ENCODE measurements at regions of chr17 and their contacts with region 1.

Region 1: DNA sequence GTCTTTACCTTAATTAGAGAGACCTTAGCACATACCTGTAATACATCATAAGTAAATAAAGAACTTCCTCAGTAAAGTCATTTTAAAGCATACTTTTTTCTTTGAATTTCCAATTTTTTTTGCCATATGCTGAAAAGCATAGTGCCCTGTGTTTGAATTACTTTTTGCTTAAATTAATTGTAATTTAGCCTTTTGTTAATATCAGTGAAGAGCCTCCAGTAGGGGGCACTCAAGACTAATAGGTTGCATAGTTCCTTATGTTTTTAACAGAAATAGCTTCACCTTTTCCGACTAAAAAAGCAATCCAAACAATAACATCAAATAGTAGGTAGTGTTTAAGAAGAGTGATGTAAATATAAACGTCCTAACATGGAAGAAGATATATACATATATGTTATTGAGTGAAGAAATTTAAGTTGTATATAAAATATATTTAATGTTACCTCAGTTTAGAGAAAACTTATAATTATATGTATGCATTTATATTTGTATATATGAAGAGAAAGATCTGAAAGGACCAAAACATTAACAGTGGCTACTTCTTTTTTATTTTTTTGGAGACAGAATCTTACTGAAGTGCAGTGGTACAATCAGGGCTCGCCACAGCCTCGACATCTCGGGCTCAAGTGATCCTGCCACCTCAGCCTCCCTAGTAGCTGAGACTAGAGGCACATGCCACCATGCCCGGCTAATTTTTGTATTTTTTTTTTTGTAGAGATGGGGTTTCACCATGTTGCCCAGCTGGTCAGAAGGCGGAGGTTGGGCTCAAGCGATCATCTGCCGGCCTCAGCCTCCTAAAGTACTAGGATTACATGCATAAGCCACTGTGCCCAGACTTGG is 18.8 kb downstream of the RAD51C start:
- H3K4me3 ChIP-seq: no peak overlapping the region
- H3K27ac ChIP-seq: no peak overlapping the region
- H3K4me1 ChIP-seq: no peaks in the 10 kb centered on the region
- CTCF ChIP-seq: peak; percentile 24; the same call in 1 of the 2 replicates

Region 2: GRCh38 chr17:58669853-58670252 is 41.3 kb before region 1 on chr17:
- CTCF ChIA-PET with region 1: no interaction called
- POLR2A ChIA-PET with region 1: no interaction called
- H3K4me3 ChIP-seq: no peak overlapping the region
- H3K27ac ChIP-seq: no peak overlapping the region
- H3K4me1 ChIP-seq: no peaks in the 10 kb centered on the region
- CTCF ChIP-seq: no peak

Region 3: DNA sequence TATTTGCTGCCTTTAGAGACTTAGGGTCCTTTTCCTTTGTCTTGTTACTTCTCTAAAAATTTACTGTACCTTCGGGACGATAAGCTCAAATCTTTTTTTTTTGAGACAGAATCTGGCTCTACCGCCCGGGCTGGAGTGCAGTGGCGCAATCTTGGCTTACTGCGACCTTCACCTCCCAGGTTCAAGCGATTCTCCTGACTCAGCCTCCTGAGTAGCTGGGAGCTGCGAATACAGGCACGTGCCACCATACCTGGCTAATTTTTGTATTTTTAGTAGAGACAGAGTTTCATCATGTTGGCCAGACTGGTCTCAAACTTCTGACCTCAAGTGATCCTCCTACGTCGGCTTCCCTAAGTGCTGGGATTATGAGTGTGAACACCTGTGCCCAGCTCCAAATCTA is 11.4 kb before region 1 on chr17:
- CTCF ChIA-PET with region 1: interaction called, 17 read pairs
- POLR2A ChIA-PET with region 1: interaction called, 3 read pairs
- H3K4me3 ChIP-seq: no peak overlapping the region
- H3K27ac ChIP-seq: no peak overlapping the region
- H3K4me1 ChIP-seq: peaks cover 3% of the 10 kb centered on the region; the same call in 1 of the 2 replicates
- CTCF ChIP-seq: no peak

Region 4: GRCh38 chr17:59004338-59005111 is 293.4 kb after region 1 on chr17:
- CTCF ChIA-PET with region 1: interaction called, 69 read pairs
- POLR2A ChIA-PET with region 1: interaction called, 3 read pairs
- H3K4me3 ChIP-seq: no peak overlapping the region
- H3K27ac ChIP-seq: no peak overlapping the region
- H3K4me1 ChIP-seq: no peaks in the 10 kb centered on the region
- CTCF ChIP-seq: peak; percentile 83

Measured in HEK293 (cell line).